ENCODE measurements at regions of chr2 and their contacts with region 1.

Region 1: GRCh38 chr2:3518496-3519254 is 656 bp downstream of the ADI1 start:
- DNase-seq: peak; percentile 96 to 99
- H3K4me3 ChIP-seq: peak overlapping the region; percentile 91 to 92
- H3K27ac ChIP-seq: peak overlapping the region; percentile 99
- H3K4me1 ChIP-seq: peaks cover 0 to 44% (median 28%) of the 10 kb centered on the region in 4 donors
- H3K27me3 ChIP-seq: no peaks in the 10 kb centered on the region
- CTCF ChIP-seq: no peak

Region 2: DNA sequence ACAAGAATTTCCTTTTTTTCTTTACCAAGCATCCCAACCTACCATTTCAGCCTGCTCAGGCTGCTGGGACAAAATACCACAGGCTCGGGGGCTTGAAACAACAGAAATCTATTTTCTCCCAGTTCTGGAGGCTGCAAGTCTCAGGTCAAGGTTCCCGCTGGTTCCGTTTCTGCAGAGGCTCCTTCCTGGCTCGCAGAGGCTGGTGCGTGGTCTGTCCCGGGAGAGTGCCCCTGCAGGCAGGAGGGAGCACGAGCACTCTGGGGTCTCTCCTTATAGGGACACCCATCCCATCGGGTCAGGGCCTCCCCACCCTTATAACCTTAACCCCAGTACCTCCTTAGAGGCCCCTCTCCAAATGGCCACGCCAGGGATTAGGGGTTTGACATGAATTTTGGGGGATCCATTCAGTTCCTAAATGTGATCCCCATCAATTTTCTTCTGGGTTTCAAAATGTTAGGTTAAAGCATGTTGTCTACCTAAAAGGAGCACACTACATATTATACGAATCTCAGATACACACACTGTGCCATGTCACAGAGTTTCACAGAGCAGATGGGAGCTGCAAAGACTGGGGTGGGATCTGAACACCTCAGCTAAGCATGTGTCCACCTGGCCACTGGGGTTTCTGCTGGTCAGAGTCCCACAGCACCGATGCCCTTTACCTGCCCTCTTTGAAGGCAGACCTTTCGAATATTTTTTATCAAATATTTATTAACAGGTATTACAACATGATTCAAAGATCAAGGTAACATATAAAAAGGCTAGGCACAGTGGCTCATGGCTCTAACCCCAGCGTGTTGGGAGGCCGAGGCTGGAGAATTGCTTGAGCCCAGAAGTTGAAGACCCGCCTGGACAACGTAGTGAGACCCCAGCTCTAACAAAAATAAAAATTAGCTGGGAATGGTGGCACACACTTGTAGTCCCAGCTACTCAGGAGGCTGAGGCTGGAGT is 18.3 kb after region 1 on chr2:
- intact Hi-C with region 1: loop called (anchors 1 kb)
- DNase-seq: peak in 1 of 2 donors; percentile 79
- H3K4me3 ChIP-seq: peak overlapping the region; percentile 51 to 56
- H3K27ac ChIP-seq: peak overlapping the region; percentile 90 to 96
- H3K4me1 ChIP-seq: peaks cover 0 to 23% (median 17%) of the 10 kb centered on the region in 4 donors
- H3K27me3 ChIP-seq: no peaks in the 10 kb centered on the region
- CTCF ChIP-seq: peak; percentile 50 to 51

Region 3: DNA sequence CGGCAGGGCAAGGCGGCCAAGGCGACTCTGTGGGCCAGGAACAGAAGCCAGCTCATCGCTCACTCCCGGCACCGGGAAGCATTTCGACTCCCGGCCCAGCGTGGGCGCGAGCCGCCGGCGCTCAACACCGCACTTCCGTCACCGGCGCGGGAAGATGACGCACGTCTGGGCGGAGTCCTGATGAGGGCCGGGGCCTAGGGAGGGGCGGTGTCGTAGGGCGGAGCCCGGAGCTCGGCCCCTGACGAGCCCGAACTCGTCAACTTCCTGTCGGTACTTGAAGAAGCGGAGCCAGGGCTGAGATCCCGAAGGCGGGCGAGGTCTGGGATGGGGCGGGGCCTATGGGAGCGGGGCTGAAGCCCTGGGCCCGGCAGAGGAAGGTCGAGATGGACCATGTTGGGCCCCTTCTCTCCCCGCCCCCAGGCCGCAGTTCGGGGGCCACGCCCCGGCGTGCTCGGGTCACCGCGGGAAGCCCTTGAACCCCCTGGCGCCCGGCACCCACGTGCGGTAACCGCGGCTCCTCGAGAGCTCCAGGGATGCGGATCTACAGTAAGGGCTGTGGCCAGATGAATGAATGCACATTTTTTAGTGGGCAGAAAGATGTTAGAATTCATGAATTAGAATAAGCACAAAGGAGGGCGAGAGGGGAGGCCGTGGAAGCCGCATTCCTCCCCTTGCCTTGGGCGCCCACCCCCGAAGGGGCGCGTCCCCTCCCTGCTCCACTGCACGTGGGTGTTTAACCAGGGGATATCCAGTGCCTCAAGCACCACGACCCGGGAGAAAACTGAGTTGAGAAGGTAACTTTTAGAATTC is 39.7 kb after region 1 on chr2 and contains the start of gene RNASEH1:
- intact Hi-C with region 1: loop called (anchors 5 kb)
- DNase-seq: peak; percentile 96 to 98
- H3K4me3 ChIP-seq: peak within 1 kb of the TSS; percentile 74 to 98
- H3K27ac ChIP-seq: peak within 1 kb of the TSS; percentile 87 to 96
- H3K4me1 ChIP-seq: peaks cover 0 to 17% (median 10%) of the 10 kb centered on the region in 4 donors
- H3K27me3 ChIP-seq: no peaks in the 10 kb centered on the region
- CTCF ChIP-seq: no peak

Measured in tibial artery (tissue), 4 donors.